WTC11 (cell line): ENCODE measurements at regions of chr5 and their contacts with region 1.

Region 1: DNA sequence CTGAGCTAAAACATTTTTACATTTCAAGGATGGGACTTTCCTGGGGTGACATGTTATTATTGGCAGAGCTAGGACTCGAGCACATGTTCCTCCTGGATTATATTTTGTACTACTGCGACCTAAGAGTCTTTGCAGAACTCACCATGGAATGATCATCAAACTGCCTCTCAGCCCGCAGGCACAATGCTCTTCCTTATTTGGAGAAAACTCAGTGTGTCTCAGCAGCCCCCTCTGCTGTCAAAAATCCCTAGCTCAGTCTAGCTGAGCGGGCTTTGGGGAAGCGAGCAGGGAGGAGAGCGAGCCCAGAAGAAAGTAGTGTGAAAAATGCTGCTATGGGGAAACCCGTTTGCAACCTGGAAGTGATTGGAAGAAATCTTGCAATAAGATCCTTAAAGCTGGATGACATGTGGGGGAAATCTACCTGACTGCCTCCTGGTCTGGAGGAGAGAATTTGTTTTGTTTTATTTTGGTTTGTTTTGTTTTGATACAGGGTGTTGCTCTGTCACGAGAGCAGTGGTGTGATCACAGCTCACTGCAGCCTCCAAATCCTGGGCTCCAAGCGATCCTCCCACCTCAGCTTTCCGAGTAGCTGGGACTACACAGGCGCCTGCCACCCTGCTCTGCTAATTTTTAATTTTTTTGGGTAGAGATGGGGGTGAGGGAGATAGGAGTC is 89.9 kb upstream of the CLINT1 start:
- DNase-seq: peak; percentile 94
- ATAC-seq: peak; percentile 94
- H3K4me3 Mint-ChIP-seq: no peak overlapping the region
- H3K27ac Mint-ChIP-seq: peak overlapping the region; percentile 91
- H3K4me1 Mint-ChIP-seq: peaks cover 49% of the 10 kb centered on the region
- H3K27me3 Mint-ChIP-seq: no peaks in the 10 kb centered on the region
- CTCF ChIP-seq: peak; percentile 67

Region 2: DNA sequence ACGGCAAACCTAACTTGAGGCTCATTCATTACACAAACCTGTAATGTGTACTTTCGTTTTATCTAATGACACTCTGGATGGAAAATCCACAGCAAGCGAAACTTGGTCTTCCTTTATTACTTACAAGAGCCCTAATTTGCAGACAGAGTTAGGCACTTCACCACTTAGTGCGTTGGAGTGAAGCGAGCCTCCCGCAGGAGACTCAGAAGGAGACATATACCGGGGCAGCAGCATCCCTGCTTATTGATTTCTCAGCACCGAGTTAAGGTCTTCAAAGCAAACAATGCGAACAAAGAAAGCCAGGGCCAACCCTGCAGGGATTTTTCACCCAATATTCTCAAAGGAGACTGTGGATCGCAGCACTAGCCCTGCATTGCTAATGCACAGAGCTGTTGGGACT is 176.7 kb before region 1 on chr5:
- CTCF ChIA-PET with region 1: no interaction called
- POLR2A ChIA-PET with region 1: no interaction called
- DNase-seq: no peak
- ATAC-seq: no peak
- H3K4me3 Mint-ChIP-seq: no peak overlapping the region
- H3K27ac Mint-ChIP-seq: no peak overlapping the region
- H3K4me1 Mint-ChIP-seq: no peaks in the 10 kb centered on the region
- H3K27me3 Mint-ChIP-seq: no peaks in the 10 kb centered on the region
- CTCF ChIP-seq: no peak

Region 3: GRCh38 chr5:157828944-157829632 is 119.8 kb before region 1 on chr5:
- CTCF ChIA-PET with region 1: interaction called, 32 read pairs
- POLR2A ChIA-PET with region 1: no interaction called
- DNase-seq: peak; percentile 38
- ATAC-seq: peak; percentile 94
- H3K4me3 Mint-ChIP-seq: no peak overlapping the region
- H3K27ac Mint-ChIP-seq: peak overlapping the region; percentile 60; the same call in 1 of the 2 replicates
- H3K4me1 Mint-ChIP-seq: peaks cover 24% of the 10 kb centered on the region
- H3K27me3 Mint-ChIP-seq: no peaks in the 10 kb centered on the region
- CTCF ChIP-seq: peak; percentile 39; the same call in 1 of the 2 replicates

Region 4: DNA sequence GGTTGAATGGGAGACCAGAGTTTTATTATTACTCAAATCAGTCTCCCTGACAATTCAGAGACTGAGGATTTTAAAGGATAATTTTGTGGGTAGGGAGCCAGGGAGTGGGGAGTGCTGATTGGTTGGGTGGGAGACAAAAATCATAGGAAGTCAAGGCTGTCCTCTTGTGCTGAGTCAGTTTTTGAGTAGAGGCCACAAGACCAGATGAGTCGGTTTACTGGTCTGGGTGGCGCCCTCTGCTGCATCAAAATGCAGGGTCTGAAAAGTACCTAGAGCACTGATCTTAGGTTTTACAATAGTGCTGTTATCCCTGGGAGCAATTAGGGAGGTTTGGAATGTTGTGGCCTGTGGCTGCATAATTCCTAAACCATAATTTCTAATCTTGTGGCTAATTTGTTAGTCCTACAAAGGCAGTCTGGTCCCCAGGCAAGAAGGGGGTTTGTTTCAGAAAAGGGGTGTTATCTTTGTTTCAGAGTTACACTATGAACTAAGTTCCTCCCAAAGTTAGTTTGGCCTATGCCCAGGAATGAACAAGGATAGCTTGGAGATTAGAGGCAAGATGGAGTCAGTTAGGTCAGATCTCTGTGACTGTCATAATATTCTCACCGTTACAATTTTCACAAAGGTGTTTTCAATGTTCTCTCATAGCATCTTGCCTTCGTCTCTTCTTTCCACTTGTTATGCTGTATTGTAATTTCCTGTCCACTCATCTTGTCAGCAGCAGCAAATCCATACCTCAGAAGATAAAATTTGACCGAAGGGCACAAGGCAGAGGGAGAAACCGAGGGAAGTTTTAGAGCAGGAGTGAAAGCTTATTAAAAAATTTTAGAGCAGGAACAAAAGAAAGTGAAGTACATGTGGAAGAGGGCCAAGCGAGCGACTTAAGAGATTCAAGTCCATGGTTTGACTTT is 30.7 kb before region 1 on chr5:
- CTCF ChIA-PET with region 1: interaction called, 11 read pairs
- POLR2A ChIA-PET with region 1: no interaction called
- DNase-seq: peak; percentile 76
- ATAC-seq: peak; percentile 89
- H3K4me3 Mint-ChIP-seq: no peak overlapping the region
- H3K27ac Mint-ChIP-seq: no peak overlapping the region
- H3K4me1 Mint-ChIP-seq: peaks cover 54% of the 10 kb centered on the region
- H3K27me3 Mint-ChIP-seq: no peaks in the 10 kb centered on the region
- CTCF ChIP-seq: peak; percentile 29; the same call in 1 of the 2 replicates

Region 5: DNA sequence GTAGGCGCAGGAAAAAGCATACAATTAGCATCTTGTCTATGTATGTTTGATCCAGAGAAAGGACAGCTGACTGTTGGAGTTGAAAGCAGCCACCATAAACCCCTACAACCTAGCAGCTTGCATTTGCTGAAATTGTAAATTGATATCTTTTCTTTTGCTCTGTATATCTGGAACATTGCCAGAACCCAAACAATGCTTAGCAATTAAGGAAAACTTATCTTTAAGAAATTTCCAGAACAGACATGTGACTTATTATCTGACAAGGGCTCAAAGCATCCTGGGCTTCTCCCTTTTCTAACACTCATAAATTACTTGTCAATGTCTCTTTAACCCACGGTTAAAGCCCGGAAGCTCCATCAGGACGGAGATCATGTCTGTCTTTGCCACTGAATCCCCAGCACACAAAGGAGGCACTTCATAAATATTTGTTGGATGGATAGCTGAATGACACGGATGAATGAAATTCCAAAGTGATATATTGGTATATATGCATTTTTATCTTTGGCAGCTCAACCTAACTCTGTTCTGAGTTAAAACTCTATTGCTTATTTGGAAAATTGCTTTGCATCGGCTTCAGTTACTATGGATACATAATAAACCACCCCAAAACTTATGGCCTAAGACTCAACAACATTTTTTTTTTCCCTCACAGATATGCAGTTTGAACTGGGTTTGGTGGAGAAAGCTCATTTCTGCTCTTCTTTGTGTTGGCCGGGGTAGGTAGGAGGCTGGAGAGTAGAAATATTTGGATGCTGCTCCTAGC is 13.1 kb after region 1 on chr5:
- CTCF ChIA-PET with region 1: interaction called, 28 read pairs
- POLR2A ChIA-PET with region 1: interaction called, 4 read pairs
- DNase-seq: no peak
- ATAC-seq: no peak
- H3K4me3 Mint-ChIP-seq: no peak overlapping the region
- H3K27ac Mint-ChIP-seq: no peak overlapping the region
- H3K4me1 Mint-ChIP-seq: peaks cover 46% of the 10 kb centered on the region
- H3K27me3 Mint-ChIP-seq: no peaks in the 10 kb centered on the region
- CTCF ChIP-seq: no peak

Region 6: GRCh38 chr5:157994906-157995519 is 46.1 kb after region 1 on chr5:
- CTCF ChIA-PET with region 1: interaction called, 36 read pairs
- POLR2A ChIA-PET with region 1: no interaction called
- DNase-seq: peak; percentile 83
- ATAC-seq: peak; percentile 100
- H3K4me3 Mint-ChIP-seq: no peak overlapping the region
- H3K27ac Mint-ChIP-seq: no peak overlapping the region
- H3K4me1 Mint-ChIP-seq: peaks cover 8% of the 10 kb centered on the region
- H3K27me3 Mint-ChIP-seq: no peaks in the 10 kb centered on the region
- CTCF ChIP-seq: peak; percentile 33; the same call in 1 of the 2 replicates